A549 (cell line): ENCODE measurements at regions of chr10 and their contacts with region 1.

Region 1: GRCh38 chr10:13659897-13660550 is 73.3 kb downstream of the PRPF18 start:
- DNase-seq: peak; percentile 27 to 59
- ATAC-seq: peak; percentile 52 to 74; a peak in 3 of 6 replicates
- H3K4me3 ChIP-seq: no peak overlapping the region
- H3K27ac ChIP-seq: no peak overlapping the region
- H3K4me1 ChIP-seq: no peaks in the 10 kb centered on the region
- CTCF ChIP-seq: peak; percentile 88
- EP300 ChIP-seq: no peak
- POLR2A ChIP-seq: no peak
- RAD21 ChIP-seq: peak; percentile 88 to 94

Region 2: DNA sequence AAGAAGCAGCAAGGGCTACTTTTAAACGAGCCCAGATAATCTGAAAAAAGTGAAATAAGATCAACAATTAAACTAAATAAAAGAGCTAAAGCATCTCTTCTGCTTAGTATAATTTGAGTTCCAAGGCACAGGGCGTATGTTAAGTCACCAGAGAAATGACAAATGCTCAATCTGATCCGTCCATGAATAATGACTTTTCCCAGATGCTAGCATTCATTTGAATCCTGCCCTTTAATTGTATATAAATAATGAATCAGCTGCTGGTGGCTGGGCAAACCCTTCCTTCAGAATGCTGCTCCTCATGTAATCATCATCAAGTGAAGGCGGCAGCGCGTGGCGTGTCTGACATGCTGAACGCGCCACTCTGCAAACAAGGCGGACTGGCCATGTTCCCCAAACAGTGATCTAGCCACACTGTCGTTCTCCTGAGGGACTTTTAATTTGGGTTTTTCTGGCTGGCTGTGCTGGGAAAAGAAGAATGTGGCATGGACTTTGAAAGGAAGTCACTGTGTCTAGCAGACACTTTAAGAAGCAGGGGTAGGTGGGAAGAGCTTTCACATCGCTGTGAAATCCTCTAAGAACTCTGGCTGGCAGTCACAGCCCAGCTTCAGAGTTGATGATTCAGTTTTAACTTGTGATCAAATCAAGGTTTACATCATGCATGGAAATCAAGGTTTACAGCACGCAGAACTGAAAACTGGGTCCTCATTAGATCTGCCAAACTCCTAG is 201.9 kb before region 1 on chr10:
- CTCF ChIA-PET with region 1: no interaction called
- POLR2A ChIA-PET with region 1: no interaction called
- DNase-seq: no peak
- ATAC-seq: no peak
- H3K4me3 ChIP-seq: no peak overlapping the region
- H3K27ac ChIP-seq: no peak overlapping the region
- H3K4me1 ChIP-seq: no peaks in the 10 kb centered on the region
- CTCF ChIP-seq: no peak
- EP300 ChIP-seq: no peak
- POLR2A ChIP-seq: no peak
- RAD21 ChIP-seq: no peak

Region 3: GRCh38 chr10:13586676-13587355 is 73.2 kb before region 1 on chr10 and contains the start of gene PRPF18:
- CTCF ChIA-PET with region 1: no interaction called
- POLR2A ChIA-PET with region 1: no interaction called
- DNase-seq: peak; percentile 96 to 98
- ATAC-seq: peak; percentile 99
- H3K4me3 ChIP-seq: peak within 1 kb of the TSS; percentile 99
- H3K27ac ChIP-seq: peak within 1 kb of the TSS; percentile 75 to 88
- H3K4me1 ChIP-seq: peaks cover 6% of the 10 kb centered on the region; the same call in 1 of the 3 replicates
- CTCF ChIP-seq: peak; percentile 87
- EP300 ChIP-seq: no peak
- POLR2A ChIP-seq: peak; percentile 63
- RAD21 ChIP-seq: peak; percentile 32 to 56; a peak in 4 of 5 replicates
- polyA plus RNA-seq, gene PRPF18: 21.5 and 39.6 TPM in 2 replicates

Region 4: GRCh38 chr10:13681098-13681497 is 21.1 kb after region 1 on chr10:
- CTCF ChIA-PET with region 1: interaction called, 12 read pairs
- POLR2A ChIA-PET with region 1: no interaction called
- DNase-seq: no peak
- ATAC-seq: no peak
- H3K4me3 ChIP-seq: no peak overlapping the region
- H3K27ac ChIP-seq: no peak overlapping the region
- H3K4me1 ChIP-seq: peaks cover 3% of the 10 kb centered on the region; the same call in 1 of the 3 replicates
- CTCF ChIP-seq: no peak
- EP300 ChIP-seq: no peak
- POLR2A ChIP-seq: no peak
- RAD21 ChIP-seq: no peak

Region 5: GRCh38 chr10:13776861-13777311 is 116.9 kb after region 1 on chr10:
- CTCF ChIA-PET with region 1: interaction called, 39 read pairs
- POLR2A ChIA-PET with region 1: no interaction called
- DNase-seq: no peak
- ATAC-seq: no peak
- H3K4me3 ChIP-seq: no peak overlapping the region
- H3K27ac ChIP-seq: no peak overlapping the region
- H3K4me1 ChIP-seq: no peaks in the 10 kb centered on the region
- CTCF ChIP-seq: no peak
- EP300 ChIP-seq: no peak
- POLR2A ChIP-seq: no peak
- RAD21 ChIP-seq: no peak

Region 6: DNA sequence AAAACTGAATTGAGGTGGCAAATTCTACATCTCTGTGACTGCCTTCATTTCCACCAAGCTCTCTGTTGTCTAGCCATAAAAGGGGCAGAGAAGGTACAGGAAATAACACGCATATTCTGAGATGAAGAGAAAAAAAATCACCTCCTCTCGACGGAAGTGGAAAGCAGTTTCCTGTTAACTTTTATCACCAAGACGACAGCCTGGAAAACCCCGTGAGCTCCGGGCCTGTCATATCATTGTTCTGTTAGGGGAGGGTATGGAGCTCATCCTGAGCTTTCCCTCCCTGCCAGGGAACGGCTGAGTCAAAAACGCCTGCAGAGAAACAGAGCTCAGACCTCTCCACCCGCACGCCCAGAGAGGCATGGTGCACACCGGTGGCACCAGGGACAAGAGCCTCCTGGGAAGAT is 127.0 kb after region 1 on chr10:
- CTCF ChIA-PET with region 1: interaction called, 39 read pairs
- POLR2A ChIA-PET with region 1: no interaction called
- DNase-seq: peak in 1 of 2 experiments; percentile 13
- ATAC-seq: peak in 1 of 2 experiments; percentile 33; a peak in 2 of 6 replicates
- H3K4me3 ChIP-seq: no peak overlapping the region
- H3K27ac ChIP-seq: no peak overlapping the region
- H3K4me1 ChIP-seq: no peaks in the 10 kb centered on the region
- CTCF ChIP-seq: no peak
- EP300 ChIP-seq: no peak
- POLR2A ChIP-seq: no peak
- RAD21 ChIP-seq: no peak